Naive thymus-derived CD8-positive, alpha-beta T cell (primary cell): ENCODE measurements at regions of chr5 and their contacts with region 1.

Region 1: GRCh38 chr5:67188274-67189078 is 8.1 kb downstream of the CD180 start:
- DNase-seq: no peak
- ATAC-seq: peak in 1 of 2 donors; percentile 57
- H3K4me3 Mint-ChIP-seq: peak overlapping the region in 5 of 10 donors; percentile 8 to 66 (median 38)
- H3K27ac Mint-ChIP-seq: peak overlapping the region; percentile 7 to 80 (median 64)
- H3K4me1 Mint-ChIP-seq: peaks cover 29 to 77% (median 43%) of the 10 kb centered on the region in 4 donors
- H3K27me3 Mint-ChIP-seq: no peaks in the 10 kb centered on the region

Region 2: DNA sequence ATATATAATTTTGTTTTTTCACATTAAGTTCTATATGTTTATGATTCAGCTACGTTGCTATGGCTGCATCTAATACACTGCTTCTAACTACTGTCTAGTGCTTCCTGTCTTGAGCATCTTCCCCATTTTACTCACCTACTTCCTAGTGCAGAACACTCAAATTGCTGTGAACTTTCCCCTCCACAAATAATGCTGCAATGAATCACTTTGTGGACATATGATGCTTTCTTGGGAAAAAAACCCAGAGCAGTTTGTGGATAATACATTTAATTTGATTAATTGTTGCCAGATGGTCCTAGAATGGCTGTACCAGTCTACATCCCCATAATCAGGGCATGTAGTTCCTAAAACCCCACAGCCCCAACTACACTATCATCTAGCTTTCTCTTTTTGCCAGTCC is 10.4 kb before region 1 on chr5:
- POLR2A ChIA-PET with region 1: interaction called, 15 read pairs
- DNase-seq: no peak
- ATAC-seq: no peak
- H3K4me3 Mint-ChIP-seq: no peak overlapping the region
- H3K27ac Mint-ChIP-seq: peak overlapping the region in 2 of 10 donors; percentile 48 to 53
- H3K4me1 Mint-ChIP-seq: peaks cover 29 to 62% (median 41%) of the 10 kb centered on the region in 4 donors
- H3K27me3 Mint-ChIP-seq: no peaks in the 10 kb centered on the region

Region 3: GRCh38 chr5:67211926-67212325 is 23.4 kb after region 1 on chr5:
- POLR2A ChIA-PET with region 1: no interaction called
- DNase-seq: no peak
- ATAC-seq: no peak
- H3K4me3 Mint-ChIP-seq: no peak overlapping the region
- H3K27ac Mint-ChIP-seq: peak overlapping the region in 8 of 10 donors; percentile 3 to 90 (median 66)
- H3K4me1 Mint-ChIP-seq: peaks cover 46 to 61% (median 59%) of the 10 kb centered on the region in 4 donors
- H3K27me3 Mint-ChIP-seq: no peaks in the 10 kb centered on the region

Region 4: GRCh38 chr5:67234671-67235176 is 46.2 kb after region 1 on chr5:
- POLR2A ChIA-PET with region 1: no interaction called
- DNase-seq: no peak
- ATAC-seq: no peak
- H3K4me3 Mint-ChIP-seq: peak overlapping the region in 1 of 10 donors; percentile 41
- H3K27ac Mint-ChIP-seq: peak overlapping the region in 1 of 10 donors; percentile 20
- H3K4me1 Mint-ChIP-seq: peaks cover 5 to 15% (median 7%) of the 10 kb centered on the region in 4 donors
- H3K27me3 Mint-ChIP-seq: peaks cover 0 to 5% (median 3%) of the 10 kb centered on the region in 5 donors